MCF 10A (cell line): ENCODE measurements at regions of chr13 and their contacts with region 1.

Region 1: GRCh38 chr13:45206340-45206739 is 5.5 kb upstream of the KCTD4 start:
- DNase-seq: peak; percentile 88
- H3K4me3 Mint-ChIP-seq: peak overlapping the region; percentile 56
- H3K27ac Mint-ChIP-seq: peak overlapping the region; percentile 88
- H3K4me1 Mint-ChIP-seq: peaks cover 47% of the 10 kb centered on the region
- H3K27me3 Mint-ChIP-seq: no peaks in the 10 kb centered on the region
- CTCF ChIP-seq: no peak

Region 2: GRCh38 chr13:43240278-43240677 is 1966.1 kb before region 1 on chr13:
- CTCF ChIA-PET with region 1: no interaction called
- POLR2A ChIA-PET with region 1: no interaction called
- intact Hi-C with region 1: no loop called
- DNase-seq: no peak
- H3K4me3 Mint-ChIP-seq: no peak overlapping the region
- H3K27ac Mint-ChIP-seq: no peak overlapping the region
- H3K4me1 Mint-ChIP-seq: peaks cover 24% of the 10 kb centered on the region
- H3K27me3 Mint-ChIP-seq: no peaks in the 10 kb centered on the region
- CTCF ChIP-seq: no peak

Region 3: GRCh38 chr13:45055198-45055901 is 151.0 kb before region 1 on chr13:
- CTCF ChIA-PET with region 1: interaction called, 4 read pairs
- POLR2A ChIA-PET with region 1: interaction called, 10 read pairs
- intact Hi-C with region 1: no loop called
- DNase-seq: peak; percentile 93
- H3K4me3 Mint-ChIP-seq: peak overlapping the region; percentile 66
- H3K27ac Mint-ChIP-seq: peak overlapping the region; percentile 88
- H3K4me1 Mint-ChIP-seq: peaks cover 14% of the 10 kb centered on the region
- H3K27me3 Mint-ChIP-seq: no peaks in the 10 kb centered on the region
- CTCF ChIP-seq: no peak

Region 4: GRCh38 chr13:45219938-45220375 is 13.6 kb after region 1 on chr13:
- CTCF ChIA-PET with region 1: interaction called, 7 read pairs
- POLR2A ChIA-PET with region 1: interaction called, 109 read pairs
- intact Hi-C with region 1: no loop called
- DNase-seq: peak; percentile 90
- H3K4me3 Mint-ChIP-seq: peak overlapping the region; percentile 28
- H3K27ac Mint-ChIP-seq: peak overlapping the region; percentile 81
- H3K4me1 Mint-ChIP-seq: peaks cover 48% of the 10 kb centered on the region
- H3K27me3 Mint-ChIP-seq: no peaks in the 10 kb centered on the region
- CTCF ChIP-seq: no peak

Region 5: DNA sequence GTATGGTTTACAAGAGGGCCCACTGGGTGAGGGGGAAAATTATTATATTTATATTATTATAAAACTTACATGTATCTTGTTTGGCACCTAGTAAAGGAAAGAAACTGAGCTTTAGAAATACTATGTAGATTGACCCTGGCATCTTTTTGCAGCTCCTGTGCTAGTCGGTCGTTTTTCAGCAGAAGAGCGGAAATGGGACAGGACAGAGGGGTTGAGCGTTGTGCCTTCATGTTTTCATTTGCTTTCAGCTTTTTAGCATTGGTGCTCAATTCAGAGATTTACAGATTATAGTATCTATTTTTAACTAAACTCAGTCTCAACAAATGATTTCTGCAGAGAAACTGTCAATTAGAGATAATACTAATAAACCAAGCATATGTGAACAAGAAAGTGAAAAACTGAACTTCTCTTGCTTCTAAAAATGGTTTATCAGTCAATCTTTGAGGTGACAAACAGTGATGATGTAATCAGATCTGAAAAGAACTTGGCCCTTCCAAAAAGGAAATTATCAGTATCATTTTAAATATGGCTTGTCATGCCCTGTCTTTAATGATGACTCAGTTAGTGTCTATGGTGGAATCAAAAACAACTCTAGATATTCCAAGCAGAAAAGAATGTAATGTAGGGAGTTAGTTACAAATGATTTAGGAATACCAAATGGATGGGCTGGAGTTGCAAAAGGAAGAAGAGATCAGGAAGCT is 51.4 kb after region 1 on chr13:
- CTCF ChIA-PET with region 1: interaction called, 5 read pairs
- POLR2A ChIA-PET with region 1: interaction called, 14 read pairs
- intact Hi-C with region 1: no loop called
- DNase-seq: no peak
- H3K4me3 Mint-ChIP-seq: no peak overlapping the region
- H3K27ac Mint-ChIP-seq: no peak overlapping the region
- H3K4me1 Mint-ChIP-seq: peaks cover 22% of the 10 kb centered on the region
- H3K27me3 Mint-ChIP-seq: no peaks in the 10 kb centered on the region
- CTCF ChIP-seq: no peak